CD8-positive, alpha-beta T cell (primary cell): ENCODE measurements at regions of chr3 and their contacts with region 1.

Region 1: GRCh38 chr3:22960105-22960984 is 242.8 kb upstream of the UBE2E2 start:
- DNase-seq: peak in 1 of 9 experiments; percentile 3
- ATAC-seq: no peak
- H3K4me3 ChIP-seq: no peak overlapping the region
- H3K4me3 Mint-ChIP-seq: no peak overlapping the region
- H3K27ac ChIP-seq: no peak overlapping the region
- H3K27ac Mint-ChIP-seq: no peak overlapping the region
- H3K4me1 ChIP-seq: no peaks in the 10 kb centered on the region
- H3K4me1 Mint-ChIP-seq: no peaks in the 10 kb centered on the region
- H3K27me3 ChIP-seq: no peaks in the 10 kb centered on the region
- H3K27me3 Mint-ChIP-seq: no peaks in the 10 kb centered on the region
- CTCF ChIP-seq: peak; percentile 33

Region 2: DNA sequence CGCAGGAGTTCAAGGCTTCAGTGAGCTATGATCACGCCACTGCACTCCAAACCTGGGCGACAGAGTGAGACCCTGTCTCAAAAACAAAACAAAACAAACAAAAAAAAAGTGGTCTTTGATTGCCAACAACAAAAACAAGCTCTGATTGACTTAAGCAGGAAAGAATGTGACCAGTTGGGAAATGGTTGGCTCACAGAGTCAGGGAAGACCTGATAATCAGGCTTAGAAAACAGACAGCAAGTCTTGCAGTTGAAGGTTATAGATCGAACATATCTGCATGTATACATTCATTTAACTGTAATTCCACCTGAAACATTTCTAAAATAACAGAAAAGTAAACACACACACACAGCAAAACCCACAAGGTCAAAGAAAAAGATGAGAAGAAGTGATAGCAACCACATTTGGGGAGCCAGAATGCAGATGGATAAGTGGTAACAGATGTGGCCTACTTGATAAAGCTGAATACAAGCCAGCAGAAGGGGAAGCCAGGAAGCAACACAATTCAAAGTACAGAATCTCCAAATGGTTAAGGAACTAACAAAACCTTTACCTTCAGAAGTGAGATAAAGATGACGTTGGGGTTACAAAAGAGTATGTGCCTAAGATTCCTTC is 509.5 kb before region 1 on chr3:
- CTCF ChIA-PET with region 1: no interaction called
- POLR2A ChIA-PET with region 1: no interaction called
- intact Hi-C with region 1: no loop called
- DNase-seq: no peak
- ATAC-seq: no peak
- H3K4me3 ChIP-seq: no peak overlapping the region
- H3K4me3 Mint-ChIP-seq: no peak overlapping the region
- H3K27ac ChIP-seq: no peak overlapping the region
- H3K27ac Mint-ChIP-seq: no peak overlapping the region
- H3K4me1 ChIP-seq: no peaks in the 10 kb centered on the region
- H3K4me1 Mint-ChIP-seq: no peaks in the 10 kb centered on the region
- H3K27me3 ChIP-seq: no peaks in the 10 kb centered on the region
- H3K27me3 Mint-ChIP-seq: no peaks in the 10 kb centered on the region
- CTCF ChIP-seq: no peak

Region 3: GRCh38 chr3:22980346-22980745 is 20.0 kb after region 1 on chr3:
- CTCF ChIA-PET with region 1: no interaction called
- POLR2A ChIA-PET with region 1: no interaction called
- intact Hi-C with region 1: loop called in 1 of 2 experiments (anchors 1 kb)
- DNase-seq: no peak
- ATAC-seq: no peak
- H3K4me3 ChIP-seq: no peak overlapping the region
- H3K4me3 Mint-ChIP-seq: no peak overlapping the region
- H3K27ac ChIP-seq: no peak overlapping the region
- H3K27ac Mint-ChIP-seq: no peak overlapping the region
- H3K4me1 ChIP-seq: no peaks in the 10 kb centered on the region
- H3K4me1 Mint-ChIP-seq: peaks cover 4% of the 10 kb centered on the region
- H3K27me3 ChIP-seq: no peaks in the 10 kb centered on the region
- H3K27me3 Mint-ChIP-seq: no peaks in the 10 kb centered on the region
- CTCF ChIP-seq: no peak